GM12878 (cell line): ENCODE measurements at regions of chr7 and their contacts with region 1.

Region 1: GRCh38 chr7:37181550-37181932 is 267.1 kb downstream of the ELMO1 start:
- DNase-seq: no peak
- ATAC-seq: peak; percentile 14; the same call in 2 of the 3 replicates
- H3K4me3 ChIP-seq: no peak overlapping the region
- H3K27ac ChIP-seq: no peak overlapping the region
- H3K4me1 ChIP-seq: no peaks in the 10 kb centered on the region
- H3K27me3 ChIP-seq: no peaks in the 10 kb centered on the region
- CTCF ChIP-seq: no peak
- EP300 ChIP-seq: no peak
- POLR2A ChIP-seq: no peak
- RAD21 ChIP-seq: no peak

Region 2: DNA sequence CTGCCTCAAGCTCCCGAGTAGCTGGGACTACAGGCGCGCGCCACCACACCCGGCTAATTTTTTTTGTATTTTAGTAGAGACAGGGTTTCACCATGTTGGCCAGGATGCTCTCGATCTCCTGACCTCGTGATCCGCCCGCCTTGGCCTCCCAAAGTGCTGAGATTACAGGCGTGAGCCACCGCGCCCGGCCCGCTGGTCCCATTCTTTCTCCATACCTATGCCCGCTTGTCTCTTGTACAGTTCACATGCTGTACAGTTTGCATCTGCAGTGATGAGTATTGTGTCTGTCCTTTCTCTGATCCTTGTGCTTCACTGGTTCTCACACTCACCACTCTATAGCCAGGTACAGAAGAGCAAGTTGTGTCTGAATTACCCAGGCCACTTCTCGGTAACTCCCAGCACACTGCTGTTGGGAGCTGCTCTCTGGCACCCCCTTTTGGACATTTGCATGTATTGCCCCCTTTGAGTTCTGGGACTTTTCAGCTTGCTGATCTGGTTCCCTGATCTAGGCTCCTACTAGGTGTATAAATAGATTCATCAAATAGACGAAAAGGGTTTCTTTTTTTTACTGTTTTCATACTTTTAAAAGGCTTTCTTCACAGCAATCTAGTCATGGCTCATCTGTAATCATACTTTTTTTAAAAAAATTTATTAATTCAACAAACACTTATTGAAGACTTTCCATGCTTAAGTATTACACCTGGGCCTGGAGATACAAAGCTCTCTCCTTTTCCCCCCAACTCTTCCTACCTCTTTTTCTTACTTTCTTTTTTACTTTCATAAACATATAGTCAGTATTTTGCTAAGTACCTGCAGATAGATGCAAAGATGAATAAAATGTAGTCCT is 510.7 kb before region 1 on chr7:
- CTCF ChIA-PET with region 1: interaction called, 16 read pairs
- POLR2A ChIA-PET with region 1: no interaction called
- RAD21 ChIA-PET with region 1: interaction called, 13 read pairs
- SMC1A ChIA-PET with region 1: interaction called, 12 read pairs
- in situ Hi-C with region 1: no loop called
- intact Hi-C with region 1: loop called (anchors 5 kb)
- DNase-seq: peak; percentile 28
- ATAC-seq: peak; percentile 95
- H3K4me3 ChIP-seq: no peak overlapping the region
- H3K27ac ChIP-seq: no peak overlapping the region
- H3K4me1 ChIP-seq: no peaks in the 10 kb centered on the region
- H3K27me3 ChIP-seq: peaks cover 0 to 6% of the 10 kb centered on the region in 2 experiments; a peak in 1 of 4 replicates
- CTCF ChIP-seq: peak; percentile 83 to 88 (median 86)
- EP300 ChIP-seq: no peak
- POLR2A ChIP-seq: no peak
- RAD21 ChIP-seq: peak; percentile 81

Region 3: GRCh38 chr7:36943591-36944435 is 237.7 kb before region 1 on chr7:
- CTCF ChIA-PET with region 1: interaction called, 13 read pairs
- POLR2A ChIA-PET with region 1: no interaction called
- RAD21 ChIA-PET with region 1: interaction called, 7 read pairs
- SMC1A ChIA-PET with region 1: interaction called, 8 read pairs
- in situ Hi-C with region 1: no loop called
- intact Hi-C with region 1: no loop called
- DNase-seq: no peak
- ATAC-seq: peak; percentile 78
- H3K4me3 ChIP-seq: peak overlapping the region; percentile 61
- H3K27ac ChIP-seq: peak overlapping the region; percentile 47
- H3K4me1 ChIP-seq: peaks cover 42% of the 10 kb centered on the region
- H3K27me3 ChIP-seq: no peaks in the 10 kb centered on the region
- CTCF ChIP-seq: no peak
- EP300 ChIP-seq: no peak
- POLR2A ChIP-seq: no peak
- RAD21 ChIP-seq: no peak

Region 4: GRCh38 chr7:36986429-36987362 is 194.8 kb before region 1 on chr7:
- CTCF ChIA-PET with region 1: interaction called, 186 read pairs
- POLR2A ChIA-PET with region 1: no interaction called
- RAD21 ChIA-PET with region 1: interaction called, 119 read pairs
- SMC1A ChIA-PET with region 1: interaction called, 104 read pairs
- in situ Hi-C with region 1: loop called (anchors 5 kb)
- intact Hi-C with region 1: loop called (anchors 2 kb)
- DNase-seq: no peak
- ATAC-seq: peak; percentile 93
- H3K4me3 ChIP-seq: no peak overlapping the region
- H3K27ac ChIP-seq: no peak overlapping the region
- H3K4me1 ChIP-seq: no peaks in the 10 kb centered on the region
- H3K27me3 ChIP-seq: no peaks in the 10 kb centered on the region
- CTCF ChIP-seq: peak; percentile 83 to 92 (median 89)
- EP300 ChIP-seq: no peak
- POLR2A ChIP-seq: no peak
- RAD21 ChIP-seq: peak; percentile 87

Region 5: GRCh38 chr7:37027557-37028341 is 153.8 kb before region 1 on chr7:
- CTCF ChIA-PET with region 1: interaction called, 64 read pairs
- POLR2A ChIA-PET with region 1: interaction called, 7 read pairs
- RAD21 ChIA-PET with region 1: interaction called, 85 read pairs
- SMC1A ChIA-PET with region 1: interaction called, 43 read pairs
- in situ Hi-C with region 1: no loop called
- intact Hi-C with region 1: no loop called
- DNase-seq: no peak
- ATAC-seq: no peak
- H3K4me3 ChIP-seq: no peak overlapping the region
- H3K27ac ChIP-seq: no peak overlapping the region
- H3K4me1 ChIP-seq: no peaks in the 10 kb centered on the region
- H3K27me3 ChIP-seq: no peaks in the 10 kb centered on the region
- CTCF ChIP-seq: peak in 1 of 3 experiments; percentile 29; a peak in 2 of 6 replicates
- EP300 ChIP-seq: no peak
- POLR2A ChIP-seq: no peak
- RAD21 ChIP-seq: peak; percentile 51; the same call in 1 of the 2 replicates

Region 6: GRCh38 chr7:37541810-37542443 is 360.4 kb after region 1 on chr7:
- CTCF ChIA-PET with region 1: no interaction called
- POLR2A ChIA-PET with region 1: no interaction called
- RAD21 ChIA-PET with region 1: no interaction called
- SMC1A ChIA-PET with region 1: no interaction called
- in situ Hi-C with region 1: no loop called
- intact Hi-C with region 1: no loop called
- DNase-seq: peak; percentile 20
- ATAC-seq: peak; percentile 79
- H3K4me3 ChIP-seq: no peak overlapping the region
- H3K27ac ChIP-seq: no peak overlapping the region
- H3K4me1 ChIP-seq: peaks cover 10% of the 10 kb centered on the region
- H3K27me3 ChIP-seq: no peaks in the 10 kb centered on the region
- CTCF ChIP-seq: no peak
- EP300 ChIP-seq: no peak
- POLR2A ChIP-seq: no peak
- RAD21 ChIP-seq: no peak